IMR-90 (cell line): ENCODE measurements at regions of chr3 and their contacts with region 1.

Region 1: DNA sequence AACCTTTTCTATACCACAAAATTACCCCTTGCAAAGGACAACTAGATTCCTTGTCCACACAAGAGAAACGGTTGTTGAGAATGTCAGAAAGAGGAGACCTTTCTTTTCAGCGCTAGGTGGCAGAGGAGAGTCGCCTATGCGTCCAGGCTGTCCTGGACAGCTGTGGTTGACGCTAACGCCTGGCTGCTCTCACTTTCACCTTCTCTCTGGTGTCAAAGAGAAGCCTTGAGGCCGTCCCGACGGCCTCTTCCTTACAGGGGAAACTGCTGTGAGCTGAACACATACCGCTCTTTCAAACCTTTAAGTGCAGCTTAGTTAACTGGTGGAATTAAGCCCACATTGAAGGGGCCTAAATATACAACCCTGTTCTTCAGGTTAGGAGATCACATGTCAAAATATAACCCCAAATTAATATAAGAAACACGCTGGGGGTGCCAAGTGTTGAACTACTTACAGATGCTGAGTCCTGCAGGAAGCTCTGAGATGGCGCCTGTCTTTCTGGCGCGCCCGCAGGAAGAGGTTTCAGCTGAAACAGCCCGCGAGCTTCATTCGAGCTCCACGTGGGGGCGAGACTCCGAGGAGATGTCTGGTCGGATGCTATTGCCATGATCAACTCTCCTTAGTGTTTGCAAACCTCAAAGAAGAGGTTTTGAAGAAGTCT is 26.1 kb upstream of the KBTBD8 start:
- DNase-seq: peak; percentile 70
- ATAC-seq: peak; percentile 99
- H3K4me3 ChIP-seq: peak overlapping the region; percentile 26
- H3K27ac ChIP-seq: no peak overlapping the region
- H3K4me1 ChIP-seq: no peaks in the 10 kb centered on the region
- H3K27me3 ChIP-seq: peaks cover 5% of the 10 kb centered on the region
- CTCF ChIP-seq: peak; percentile 87
- POLR2A ChIP-seq: peak; percentile 51; the same call in 1 of the 2 replicates
- RAD21 ChIP-seq: peak; percentile 95

Region 2: DNA sequence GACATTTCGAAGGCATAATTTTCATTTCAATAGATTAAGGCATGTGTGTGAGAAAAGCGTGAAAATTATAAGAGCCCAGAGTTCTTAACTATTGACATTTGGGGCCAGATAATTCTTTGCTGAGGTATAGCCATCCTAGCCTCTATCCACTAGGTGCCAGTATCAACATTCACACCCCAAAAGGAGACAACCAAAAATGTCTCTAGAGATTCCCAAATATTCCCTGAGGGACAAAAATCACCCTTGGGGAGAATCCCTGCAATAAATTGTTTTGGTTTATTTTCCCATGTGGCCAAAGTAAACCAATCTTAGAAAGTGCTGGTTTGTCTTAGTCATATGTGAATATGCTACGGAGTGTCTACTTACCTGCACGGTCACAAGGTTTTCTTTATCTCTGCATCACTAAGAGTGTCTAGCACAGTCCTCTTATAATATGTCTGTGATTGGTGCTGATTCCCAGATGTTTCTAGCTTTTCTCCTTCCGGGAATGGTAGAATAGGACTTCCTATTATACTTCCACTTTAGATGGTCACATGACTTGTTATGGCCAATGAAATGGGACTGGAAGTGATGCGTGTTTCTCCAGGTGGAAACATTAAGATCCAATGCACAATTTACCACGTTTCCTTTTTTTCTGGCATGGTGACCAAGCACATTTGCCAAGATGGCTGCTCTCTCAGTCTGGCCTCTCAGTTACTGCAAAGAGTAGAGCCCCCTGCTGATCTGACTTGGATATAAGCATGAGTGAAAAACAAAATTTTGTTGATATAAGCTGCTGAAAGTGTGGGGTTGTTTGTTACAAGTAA is 18.0 kb after region 1 on chr3:
- CTCF ChIA-PET with region 1: interaction called, 17 read pairs
- POLR2A ChIA-PET with region 1: no interaction called
- dilution Hi-C with region 1: no loop called
- in situ Hi-C with region 1: no loop called
- intact Hi-C with region 1: no loop called
- DNase-seq: no peak
- ATAC-seq: no peak
- H3K4me3 ChIP-seq: no peak overlapping the region
- H3K27ac ChIP-seq: no peak overlapping the region
- H3K4me1 ChIP-seq: peaks cover 2% of the 10 kb centered on the region; the same call in 1 of the 2 replicates
- H3K27me3 ChIP-seq: no peaks in the 10 kb centered on the region
- CTCF ChIP-seq: peak; percentile 14; the same call in 1 of the 2 replicates
- POLR2A ChIP-seq: no peak
- RAD21 ChIP-seq: 0 out of 2 replicates have a peak, but pooled peaks have one; percentile 5

Region 3: DNA sequence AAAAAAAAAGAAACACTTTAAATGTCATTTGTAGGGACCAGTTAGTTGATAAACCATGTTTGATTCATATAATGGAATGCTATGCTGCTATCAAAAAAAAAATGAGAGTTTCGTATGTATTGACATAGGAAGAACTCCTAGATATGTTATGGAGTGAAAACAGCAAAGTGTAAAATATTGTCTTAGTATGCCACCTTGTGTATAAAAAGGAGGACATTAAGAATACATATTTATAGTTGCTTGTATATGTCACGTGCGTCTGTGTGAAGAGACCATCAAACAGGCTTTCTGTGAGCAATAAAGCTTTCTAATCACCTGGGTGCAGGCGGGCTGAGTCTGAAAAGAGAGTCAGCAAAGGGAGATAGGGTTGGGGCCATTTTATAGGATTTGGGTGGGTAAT is 65.6 kb after region 1 on chr3:
- CTCF ChIA-PET with region 1: interaction called, 8 read pairs
- POLR2A ChIA-PET with region 1: no interaction called
- dilution Hi-C with region 1: no loop called
- in situ Hi-C with region 1: loop called (anchors 10 kb)
- intact Hi-C with region 1: loop called (anchors 1 kb)
- DNase-seq: peak; percentile 35
- ATAC-seq: peak; percentile 48; the same call in 1 of the 2 replicates
- H3K4me3 ChIP-seq: no peak overlapping the region
- H3K27ac ChIP-seq: no peak overlapping the region
- H3K4me1 ChIP-seq: no peaks in the 10 kb centered on the region
- H3K27me3 ChIP-seq: no peaks in the 10 kb centered on the region; the same call in none of the 2 replicates
- CTCF ChIP-seq: peak; percentile 44
- POLR2A ChIP-seq: no peak
- RAD21 ChIP-seq: peak; percentile 54

Region 4: DNA sequence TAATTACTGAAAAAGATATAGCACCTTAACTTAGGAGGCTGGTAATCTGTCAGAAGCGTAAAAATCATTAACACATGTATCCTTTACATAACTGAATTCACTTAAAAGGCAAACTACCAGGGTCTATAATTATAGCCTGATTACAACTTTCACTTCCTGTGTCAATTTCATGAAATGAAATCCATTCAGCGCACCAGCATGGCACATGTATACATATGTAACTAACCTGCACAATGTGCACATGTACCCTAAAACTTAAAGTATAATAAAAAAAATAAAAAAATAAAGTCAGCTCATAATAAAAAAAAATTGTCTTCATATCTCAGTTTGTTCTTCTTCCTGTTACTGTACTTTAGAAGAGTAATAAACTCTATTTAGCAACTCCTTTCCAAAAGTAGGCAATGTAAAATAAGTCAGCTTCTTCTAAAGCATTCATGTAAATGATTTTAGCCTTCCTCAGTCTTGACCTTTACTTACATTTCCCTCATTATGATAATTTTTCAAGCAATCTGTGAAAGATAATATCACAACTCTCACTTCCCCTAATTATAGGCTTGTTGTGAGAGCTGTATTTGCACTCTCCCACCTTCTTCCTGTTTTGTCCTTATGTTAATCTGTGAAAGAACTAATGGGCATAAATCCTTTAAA is 76.2 kb after region 1 on chr3:
- CTCF ChIA-PET with region 1: interaction called, 12 read pairs
- POLR2A ChIA-PET with region 1: no interaction called
- dilution Hi-C with region 1: no loop called
- in situ Hi-C with region 1: no loop called
- intact Hi-C with region 1: no loop called
- DNase-seq: no peak
- ATAC-seq: no peak
- H3K4me3 ChIP-seq: no peak overlapping the region
- H3K27ac ChIP-seq: no peak overlapping the region
- H3K4me1 ChIP-seq: peaks cover 4% of the 10 kb centered on the region
- H3K27me3 ChIP-seq: no peaks in the 10 kb centered on the region; the same call in none of the 2 replicates
- CTCF ChIP-seq: no peak
- POLR2A ChIP-seq: no peak
- RAD21 ChIP-seq: no peak

Region 5: GRCh38 chr3:67090474-67090873 is 118.5 kb after region 1 on chr3:
- CTCF ChIA-PET with region 1: no interaction called
- POLR2A ChIA-PET with region 1: no interaction called
- dilution Hi-C with region 1: no loop called
- in situ Hi-C with region 1: loop called (anchors 10 kb)
- intact Hi-C with region 1: no loop called
- DNase-seq: peak; percentile 82
- ATAC-seq: peak; percentile 84
- H3K4me3 ChIP-seq: no peak overlapping the region
- H3K27ac ChIP-seq: no peak overlapping the region
- H3K4me1 ChIP-seq: peaks cover 3% of the 10 kb centered on the region; the same call in 1 of the 2 replicates
- H3K27me3 ChIP-seq: no peaks in the 10 kb centered on the region
- CTCF ChIP-seq: no peak
- POLR2A ChIP-seq: no peak
- RAD21 ChIP-seq: no peak

Region 6: GRCh38 chr3:67357610-67358458 is 385.8 kb after region 1 on chr3:
- CTCF ChIA-PET with region 1: no interaction called
- POLR2A ChIA-PET with region 1: no interaction called
- dilution Hi-C with region 1: no loop called
- in situ Hi-C with region 1: loop called (anchors 25 kb)
- intact Hi-C with region 1: no loop called
- DNase-seq: peak; percentile 35
- ATAC-seq: peak; percentile 79
- H3K4me3 ChIP-seq: no peak overlapping the region
- H3K27ac ChIP-seq: no peak overlapping the region
- H3K4me1 ChIP-seq: no peaks in the 10 kb centered on the region
- H3K27me3 ChIP-seq: no peaks in the 10 kb centered on the region
- CTCF ChIP-seq: peak; percentile 39
- POLR2A ChIP-seq: no peak
- RAD21 ChIP-seq: peak; percentile 30; the same call in 1 of the 2 replicates

Region 7: GRCh38 chr3:68876112-68876713 is 1904.2 kb after region 1 on chr3:
- CTCF ChIA-PET with region 1: interaction called, 11 read pairs
- POLR2A ChIA-PET with region 1: no interaction called
- dilution Hi-C with region 1: no loop called
- in situ Hi-C with region 1: no loop called
- intact Hi-C with region 1: loop called (anchors 1 kb)
- DNase-seq: peak; percentile 74
- ATAC-seq: peak; percentile 96
- H3K4me3 ChIP-seq: no peak overlapping the region
- H3K27ac ChIP-seq: no peak overlapping the region
- H3K4me1 ChIP-seq: no peaks in the 10 kb centered on the region
- H3K27me3 ChIP-seq: peaks cover 3% of the 10 kb centered on the region; the same call in 1 of the 2 replicates
- CTCF ChIP-seq: peak; percentile 92
- POLR2A ChIP-seq: no peak
- RAD21 ChIP-seq: peak; percentile 86